ENCODE measurements at regions of chr19 and their contacts with region 1.

Region 1: GRCh38 chr19:45862564-45863334 is at the start of gene SYMPK:
- DNase-seq: peak; percentile 99
- H3K4me3 Mint-ChIP-seq: peak within 1 kb of the TSS; percentile 90
- H3K27ac Mint-ChIP-seq: peak within 1 kb of the TSS; percentile 86
- H3K4me1 Mint-ChIP-seq: peaks cover 10% of the 10 kb centered on the region
- H3K27me3 Mint-ChIP-seq: peaks cover 50% of the 10 kb centered on the region
- CTCF ChIP-seq: no peak
- total RNA-seq, gene SYMPK: 77.4 and 86.2 TPM in 2 replicates

Region 2: GRCh38 chr19:45805719-45806118 is 57.0 kb before region 1 on chr19:
- CTCF ChIA-PET with region 1: no interaction called
- POLR2A ChIA-PET with region 1: no interaction called
- intact Hi-C with region 1: no loop called
- DNase-seq: no peak
- H3K4me3 Mint-ChIP-seq: no peak overlapping the region
- H3K27ac Mint-ChIP-seq: no peak overlapping the region
- H3K4me1 Mint-ChIP-seq: peaks cover 23% of the 10 kb centered on the region
- H3K27me3 Mint-ChIP-seq: no peaks in the 10 kb centered on the region
- CTCF ChIP-seq: no peak

Region 3: GRCh38 chr19:45834970-45835369 is 27.8 kb before region 1 on chr19:
- CTCF ChIA-PET with region 1: no interaction called
- POLR2A ChIA-PET with region 1: no interaction called
- intact Hi-C with region 1: no loop called
- DNase-seq: no peak
- H3K4me3 Mint-ChIP-seq: no peak overlapping the region
- H3K27ac Mint-ChIP-seq: peak overlapping the region; percentile 84
- H3K4me1 Mint-ChIP-seq: no peaks in the 10 kb centered on the region
- H3K27me3 Mint-ChIP-seq: no peaks in the 10 kb centered on the region
- CTCF ChIP-seq: no peak

Region 4: GRCh38 chr19:45902651-45903625 is 40.2 kb after region 1 on chr19:
- CTCF ChIA-PET with region 1: no interaction called
- POLR2A ChIA-PET with region 1: interaction called, 12 read pairs
- intact Hi-C with region 1: no loop called
- DNase-seq: peak; percentile 98
- H3K4me3 Mint-ChIP-seq: peak overlapping the region; percentile 98
- H3K27ac Mint-ChIP-seq: no peak overlapping the region
- H3K4me1 Mint-ChIP-seq: peaks cover 6% of the 10 kb centered on the region
- H3K27me3 Mint-ChIP-seq: no peaks in the 10 kb centered on the region
- CTCF ChIP-seq: no peak